CD8-positive, alpha-beta T cell (primary cell): ENCODE measurements at regions of chr1 and their contacts with region 1.

Region 1: GRCh38 chr1:151909150-151910149 is at the start of gene THEM4:
- DNase-seq: peak; percentile 83 to 96 (median 91)
- ATAC-seq: peak; percentile 82
- H3K4me3 ChIP-seq: peak within 1 kb of the TSS; percentile 60 to 75
- H3K4me3 Mint-ChIP-seq: peak within 1 kb of the TSS; percentile 83
- H3K27ac ChIP-seq: peak within 1 kb of the TSS; percentile 56 to 89
- H3K27ac Mint-ChIP-seq: peak within 1 kb of the TSS; percentile 85
- H3K4me1 ChIP-seq: peaks cover 49% of the 10 kb centered on the region
- H3K4me1 Mint-ChIP-seq: peaks cover 40% of the 10 kb centered on the region
- H3K27me3 ChIP-seq: no peaks in the 10 kb centered on the region
- H3K27me3 Mint-ChIP-seq: no peaks in the 10 kb centered on the region
- CTCF ChIP-seq: no peak
- total RNA-seq, gene THEM4: 14.3 to 16.8 TPM

Region 2: GRCh38 chr1:151693076-151693651 is 216.3 kb before region 1 on chr1:
- CTCF ChIA-PET with region 1: no interaction called
- POLR2A ChIA-PET with region 1: no interaction called
- intact Hi-C with region 1: no loop called
- DNase-seq: no peak
- ATAC-seq: no peak
- H3K4me3 ChIP-seq: no peak overlapping the region
- H3K4me3 Mint-ChIP-seq: no peak overlapping the region
- H3K27ac ChIP-seq: no peak overlapping the region
- H3K27ac Mint-ChIP-seq: no peak overlapping the region
- H3K4me1 ChIP-seq: no peaks in the 10 kb centered on the region
- H3K4me1 Mint-ChIP-seq: no peaks in the 10 kb centered on the region
- H3K27me3 ChIP-seq: no peaks in the 10 kb centered on the region
- H3K27me3 Mint-ChIP-seq: no peaks in the 10 kb centered on the region
- CTCF ChIP-seq: no peak

Region 3: DNA sequence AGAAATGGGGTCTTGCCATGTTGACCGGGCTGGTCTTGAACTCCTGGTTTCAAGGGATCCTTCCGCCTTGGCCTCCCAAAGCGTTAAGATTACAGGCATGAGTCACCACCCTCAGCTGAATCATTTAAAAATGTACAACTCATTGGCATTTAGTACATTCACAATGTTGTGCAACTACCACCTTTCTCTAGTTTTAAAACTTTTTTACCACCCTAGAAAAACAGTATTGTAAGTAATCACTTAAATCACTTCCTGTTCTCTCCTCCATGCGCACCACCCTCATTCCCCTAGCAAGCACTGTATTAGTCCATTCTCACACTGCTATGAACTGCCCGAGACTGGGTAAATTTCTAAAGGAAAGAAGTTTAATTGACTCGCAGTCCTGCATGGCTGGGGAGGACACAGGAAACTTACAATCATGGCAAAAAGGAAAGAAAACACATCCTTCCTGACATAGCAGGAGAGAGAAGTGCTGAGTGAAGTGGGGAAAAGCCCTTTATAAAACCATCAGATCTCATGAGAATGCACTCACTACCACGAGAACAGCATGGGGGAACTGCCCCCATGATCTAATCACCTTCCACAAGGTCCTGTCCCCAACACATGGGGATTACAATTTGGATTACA is 41.6 kb before region 1 on chr1:
- CTCF ChIA-PET with region 1: no interaction called
- POLR2A ChIA-PET with region 1: no interaction called
- intact Hi-C with region 1: no loop called
- DNase-seq: no peak
- ATAC-seq: no peak
- H3K4me3 ChIP-seq: no peak overlapping the region
- H3K4me3 Mint-ChIP-seq: no peak overlapping the region
- H3K27ac ChIP-seq: no peak overlapping the region
- H3K27ac Mint-ChIP-seq: no peak overlapping the region
- H3K4me1 ChIP-seq: no peaks in the 10 kb centered on the region
- H3K4me1 Mint-ChIP-seq: no peaks in the 10 kb centered on the region
- H3K27me3 ChIP-seq: no peaks in the 10 kb centered on the region
- H3K27me3 Mint-ChIP-seq: no peaks in the 10 kb centered on the region
- CTCF ChIP-seq: no peak

Region 4: GRCh38 chr1:151888972-151889570 is 20.4 kb before region 1 on chr1:
- CTCF ChIA-PET with region 1: interaction called, 6 read pairs
- POLR2A ChIA-PET with region 1: interaction called, 7 read pairs
- intact Hi-C with region 1: loop called in 1 of 2 experiments (anchors 1 kb)
- DNase-seq: peak in 2 of 9 experiments; percentile 48 to 58
- ATAC-seq: peak; percentile 69
- H3K4me3 ChIP-seq: no peak overlapping the region
- H3K4me3 Mint-ChIP-seq: no peak overlapping the region
- H3K27ac ChIP-seq: no peak overlapping the region
- H3K27ac Mint-ChIP-seq: peak overlapping the region; percentile 19
- H3K4me1 ChIP-seq: peaks cover 13% of the 10 kb centered on the region
- H3K4me1 Mint-ChIP-seq: peaks cover 24% of the 10 kb centered on the region
- H3K27me3 ChIP-seq: no peaks in the 10 kb centered on the region
- H3K27me3 Mint-ChIP-seq: no peaks in the 10 kb centered on the region
- CTCF ChIP-seq: peak; percentile 53

Region 5: DNA sequence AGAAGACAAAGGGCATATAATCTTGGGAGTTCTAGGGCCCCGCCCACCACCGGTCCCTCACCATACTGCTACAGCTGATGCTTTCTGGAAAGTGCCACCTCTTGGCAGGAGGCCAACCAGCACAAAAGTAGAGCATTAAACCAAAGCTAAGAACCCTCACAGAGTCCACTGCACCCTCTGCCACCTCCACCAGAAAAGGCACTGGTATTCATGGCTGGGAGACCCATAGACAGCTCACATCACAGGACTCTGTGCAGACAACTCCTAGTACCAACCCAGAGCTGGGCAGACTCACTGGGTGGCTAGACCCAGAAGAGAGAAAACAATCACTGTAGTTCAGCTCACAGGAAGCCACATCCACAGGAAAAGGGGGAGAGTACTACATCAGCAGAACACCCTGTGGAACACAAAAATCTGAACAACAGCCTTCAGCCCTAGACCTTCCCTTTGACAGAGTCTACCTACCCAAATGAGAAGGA is 10.9 kb before region 1 on chr1:
- CTCF ChIA-PET with region 1: interaction called, 26 read pairs
- POLR2A ChIA-PET with region 1: interaction called, 31 read pairs
- intact Hi-C with region 1: loop called (anchors 1 kb)
- DNase-seq: peak; percentile 25 to 82 (median 68)
- ATAC-seq: peak; percentile 87
- H3K4me3 ChIP-seq: peak overlapping the region; percentile 15 to 17
- H3K4me3 Mint-ChIP-seq: peak overlapping the region; percentile 78
- H3K27ac ChIP-seq: peak overlapping the region; percentile 36 to 60
- H3K27ac Mint-ChIP-seq: peak overlapping the region; percentile 98
- H3K4me1 ChIP-seq: peaks cover 45% of the 10 kb centered on the region
- H3K4me1 Mint-ChIP-seq: peaks cover 68% of the 10 kb centered on the region
- H3K27me3 ChIP-seq: no peaks in the 10 kb centered on the region
- H3K27me3 Mint-ChIP-seq: no peaks in the 10 kb centered on the region
- CTCF ChIP-seq: no peak

Region 6: DNA sequence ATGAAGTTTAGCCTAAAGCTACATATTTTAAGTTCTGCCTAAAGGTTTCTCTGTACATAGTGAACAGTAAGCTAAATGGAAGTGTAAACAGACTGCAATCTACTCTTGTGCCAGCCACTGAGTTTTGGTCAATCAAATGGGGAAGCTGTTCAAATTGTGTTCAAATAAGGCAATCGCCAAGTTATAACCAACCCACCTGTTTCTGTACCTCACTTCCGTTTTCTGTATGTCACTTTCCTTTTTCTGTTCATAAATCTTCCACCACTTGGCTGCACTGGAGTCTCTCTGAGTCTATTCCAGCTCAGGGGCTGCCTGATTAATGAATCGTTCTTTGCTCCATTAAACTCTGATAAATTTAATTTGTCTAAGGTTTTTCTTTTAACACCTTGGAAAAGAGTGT is 10.7 kb after region 1 on chr1:
- CTCF ChIA-PET with region 1: interaction called, 10 read pairs
- POLR2A ChIA-PET with region 1: interaction called, 4 read pairs
- intact Hi-C with region 1: no loop called
- DNase-seq: no peak
- ATAC-seq: no peak
- H3K4me3 ChIP-seq: no peak overlapping the region
- H3K4me3 Mint-ChIP-seq: no peak overlapping the region
- H3K27ac ChIP-seq: no peak overlapping the region
- H3K27ac Mint-ChIP-seq: no peak overlapping the region
- H3K4me1 ChIP-seq: peaks cover 3% of the 10 kb centered on the region
- H3K4me1 Mint-ChIP-seq: peaks cover 3% of the 10 kb centered on the region
- H3K27me3 ChIP-seq: no peaks in the 10 kb centered on the region
- H3K27me3 Mint-ChIP-seq: no peaks in the 10 kb centered on the region
- CTCF ChIP-seq: no peak

Region 7: GRCh38 chr1:151939779-151940178 is 30.3 kb after region 1 on chr1:
- CTCF ChIA-PET with region 1: no interaction called
- POLR2A ChIA-PET with region 1: no interaction called
- intact Hi-C with region 1: no loop called
- DNase-seq: no peak
- ATAC-seq: no peak
- H3K4me3 ChIP-seq: no peak overlapping the region
- H3K4me3 Mint-ChIP-seq: no peak overlapping the region
- H3K27ac ChIP-seq: no peak overlapping the region
- H3K27ac Mint-ChIP-seq: no peak overlapping the region
- H3K4me1 ChIP-seq: peaks cover 2% of the 10 kb centered on the region
- H3K4me1 Mint-ChIP-seq: peaks cover 9% of the 10 kb centered on the region
- H3K27me3 ChIP-seq: no peaks in the 10 kb centered on the region
- H3K27me3 Mint-ChIP-seq: no peaks in the 10 kb centered on the region
- CTCF ChIP-seq: no peak

Region 8: GRCh38 chr1:151976858-151977257 is 67.4 kb after region 1 on chr1:
- CTCF ChIA-PET with region 1: no interaction called
- POLR2A ChIA-PET with region 1: no interaction called
- intact Hi-C with region 1: no loop called
- DNase-seq: no peak
- ATAC-seq: no peak
- H3K4me3 ChIP-seq: no peak overlapping the region
- H3K4me3 Mint-ChIP-seq: no peak overlapping the region
- H3K27ac ChIP-seq: no peak overlapping the region
- H3K27ac Mint-ChIP-seq: no peak overlapping the region
- H3K4me1 ChIP-seq: no peaks in the 10 kb centered on the region
- H3K4me1 Mint-ChIP-seq: peaks cover 9% of the 10 kb centered on the region
- H3K27me3 ChIP-seq: no peaks in the 10 kb centered on the region
- H3K27me3 Mint-ChIP-seq: no peaks in the 10 kb centered on the region
- CTCF ChIP-seq: no peak